Activated T-helper 2 cell treated with anti-CD3 and anti-CD28 coated beads, Interferon-gamma antibody, Interleukin-2, Interleukin-4, amounts not matched to agents 10 μg/mL and 5 μg/mL and 100 μg/mL, durations not matched to agents 14 hours and 24 hours and 36 hours (primary cell): ENCODE measurements at regions of chr3 and their contacts with region 1.

Region 1: DNA sequence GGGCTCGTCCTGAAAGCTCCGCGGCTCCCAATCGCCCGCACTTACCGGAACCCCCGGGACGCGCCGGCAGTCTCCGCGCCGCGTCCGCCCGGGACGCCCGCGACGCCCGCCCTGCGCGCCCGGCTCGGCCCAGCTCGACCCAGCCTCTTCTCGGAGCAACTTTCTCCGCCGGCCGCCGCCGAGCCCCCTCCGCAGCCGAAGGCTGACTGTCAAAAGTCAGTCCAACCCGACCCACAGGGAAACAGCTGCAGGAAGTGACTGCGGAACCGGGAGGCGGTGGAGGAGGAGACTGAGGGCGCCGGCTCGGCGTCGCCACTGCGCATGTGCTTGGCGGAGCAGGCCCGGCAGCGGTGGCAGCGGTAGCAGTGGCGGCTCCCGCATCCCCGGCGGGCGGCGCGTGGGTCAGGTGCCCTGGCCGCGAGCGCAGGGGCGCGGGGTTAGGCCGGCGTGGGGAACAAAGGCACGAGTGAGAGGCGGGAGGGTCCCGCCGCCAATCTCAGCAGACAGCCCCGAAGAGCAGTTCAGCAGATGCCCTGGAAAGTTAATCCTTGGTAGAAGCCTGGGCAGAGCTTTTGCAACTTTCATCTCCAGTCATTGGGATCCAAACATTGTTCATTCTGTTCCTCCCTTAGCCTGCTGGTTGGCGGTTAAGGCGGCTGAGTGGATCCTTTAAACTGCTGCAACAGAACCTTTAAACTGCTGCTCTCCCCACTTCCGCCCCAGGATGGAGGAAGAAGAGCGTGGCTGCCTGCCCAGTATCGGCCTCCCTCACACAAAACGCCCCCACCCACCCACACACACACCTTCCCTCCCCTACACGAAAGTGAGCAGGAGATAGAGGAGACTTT is at the start of gene ZMAT3:
- DNase-seq: peak; percentile 83
- H3K4me3 Mint-ChIP-seq: peak within 1 kb of the TSS; percentile 98
- H3K27ac Mint-ChIP-seq: peak within 1 kb of the TSS; percentile 94
- H3K4me1 Mint-ChIP-seq: peaks cover 31% of the 10 kb centered on the region
- H3K27me3 Mint-ChIP-seq: no peaks in the 10 kb centered on the region
- total RNA-seq, gene ZMAT3: 8.9 and 10.6 TPM in 2 replicates

Region 2: GRCh38 chr3:178768072-178768864 is 303.5 kb before region 1 on chr3:
- intact Hi-C with region 1: no loop called
- DNase-seq: no peak
- H3K4me3 Mint-ChIP-seq: no peak overlapping the region
- H3K27ac Mint-ChIP-seq: no peak overlapping the region
- H3K4me1 Mint-ChIP-seq: no peaks in the 10 kb centered on the region
- H3K27me3 Mint-ChIP-seq: no peaks in the 10 kb centered on the region

Region 3: GRCh38 chr3:179015551-179016020 is 56.2 kb before region 1 on chr3:
- intact Hi-C with region 1: loop called (anchors 1 kb)
- DNase-seq: peak; percentile 62
- H3K4me3 Mint-ChIP-seq: no peak overlapping the region
- H3K27ac Mint-ChIP-seq: peak overlapping the region; percentile 2
- H3K4me1 Mint-ChIP-seq: peaks cover 35% of the 10 kb centered on the region
- H3K27me3 Mint-ChIP-seq: peaks cover 17% of the 10 kb centered on the region

Region 4: DNA sequence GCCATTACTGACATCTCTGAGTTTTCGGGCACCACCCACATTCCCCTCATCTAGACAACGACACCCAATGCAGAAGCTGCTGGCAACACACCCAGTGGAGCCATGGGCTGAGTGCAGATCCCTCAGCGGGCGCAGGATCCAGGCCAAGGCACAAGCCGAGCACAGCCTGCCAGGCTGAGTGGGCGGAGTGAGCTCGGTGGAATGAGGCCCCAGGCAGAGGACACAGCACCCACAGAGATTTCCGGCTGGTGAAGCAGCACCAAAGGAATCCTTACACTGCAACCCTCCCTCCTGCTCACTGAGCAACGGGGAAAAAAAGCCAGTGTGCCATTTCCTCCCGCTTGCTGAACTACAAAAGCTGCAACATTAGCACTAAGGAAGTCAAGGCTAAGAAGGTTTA is 34.4 kb before region 1 on chr3:
- intact Hi-C with region 1: loop called (anchors 5 kb)
- DNase-seq: peak; percentile 40
- H3K4me3 Mint-ChIP-seq: peak overlapping the region; percentile 62
- H3K27ac Mint-ChIP-seq: peak overlapping the region; percentile 17
- H3K4me1 Mint-ChIP-seq: peaks cover 2% of the 10 kb centered on the region
- H3K27me3 Mint-ChIP-seq: no peaks in the 10 kb centered on the region

Region 5: GRCh38 chr3:179604321-179605078 is 532.7 kb after region 1 on chr3 and contains the starts of genes MRPL47 and NDUFB5:
- intact Hi-C with region 1: loop called (anchors 5 kb)
- DNase-seq: peak; percentile 91
- H3K4me3 Mint-ChIP-seq: peak within 1 kb of the TSS; percentile 99
- H3K27ac Mint-ChIP-seq: peak within 1 kb of the TSS; percentile 99
- H3K4me1 Mint-ChIP-seq: peaks cover 31% of the 10 kb centered on the region
- H3K27me3 Mint-ChIP-seq: no peaks in the 10 kb centered on the region
- total RNA-seq, gene MRPL47: 61.2 and 64.4 TPM in 2 replicates
- total RNA-seq, gene NDUFB5: 90.3 and 91.6 TPM in 2 replicates